SK-N-SH (cell line): ENCODE measurements at regions of chr4 and their contacts with region 1.

Region 1: DNA sequence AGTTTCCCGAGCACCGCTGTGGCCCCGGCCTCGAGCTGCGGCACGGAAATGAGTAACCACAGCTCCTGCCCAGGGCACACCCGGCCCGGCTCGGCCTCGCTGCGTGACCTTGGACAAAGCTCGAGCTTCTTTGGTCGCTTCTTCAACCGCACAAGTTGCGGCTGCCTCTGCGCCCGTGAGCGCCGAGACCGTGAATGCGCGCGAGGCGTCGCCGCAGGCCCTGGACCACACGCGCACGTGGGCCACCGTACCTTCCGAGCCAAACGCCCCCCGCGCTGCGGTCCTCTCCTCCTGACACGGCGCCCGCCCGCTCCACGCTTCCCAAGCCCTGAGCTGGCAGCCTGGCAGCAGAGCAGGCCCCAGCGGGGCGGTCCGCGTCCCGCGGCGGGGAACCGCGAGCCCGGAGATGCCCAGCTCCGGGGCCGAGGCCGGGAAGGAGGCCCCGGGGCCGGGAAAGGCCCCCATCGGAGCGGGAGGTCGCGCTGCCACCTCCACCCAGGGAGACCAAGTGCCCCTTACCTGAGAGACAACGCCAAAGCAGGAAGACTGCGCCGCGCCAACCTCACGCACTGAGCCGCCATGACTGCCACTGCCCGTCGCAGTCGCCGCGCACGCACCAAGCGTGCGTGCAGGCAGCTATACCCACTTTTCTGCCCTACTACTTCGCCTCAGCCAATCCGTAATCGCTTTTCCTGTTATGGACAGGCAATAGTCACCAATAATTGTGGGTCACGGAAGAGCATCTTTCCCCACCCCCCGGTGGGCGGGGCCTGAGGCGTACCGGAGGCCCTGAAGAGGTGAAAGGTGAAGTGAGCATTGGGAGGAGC is at the start of gene GRPEL1:
- DNase-seq: peak; percentile 99
- H3K4me3 ChIP-seq: peak within 1 kb of the TSS; percentile 86 to 91
- H3K27ac ChIP-seq: peak within 1 kb of the TSS; percentile 72 to 80
- H3K4me1 ChIP-seq: peaks cover 0 to 17% of the 10 kb centered on the region in 2 experiments; a peak in 2 of 4 replicates
- H3K27me3 ChIP-seq: no peaks in the 10 kb centered on the region
- CTCF ChIP-seq: no peak
- EP300 ChIP-seq: no peak
- RAD21 ChIP-seq: no peak
- polyA plus RNA-seq, gene GRPEL1: 29.8 and 32.8 TPM in 2 replicates

Region 2: DNA sequence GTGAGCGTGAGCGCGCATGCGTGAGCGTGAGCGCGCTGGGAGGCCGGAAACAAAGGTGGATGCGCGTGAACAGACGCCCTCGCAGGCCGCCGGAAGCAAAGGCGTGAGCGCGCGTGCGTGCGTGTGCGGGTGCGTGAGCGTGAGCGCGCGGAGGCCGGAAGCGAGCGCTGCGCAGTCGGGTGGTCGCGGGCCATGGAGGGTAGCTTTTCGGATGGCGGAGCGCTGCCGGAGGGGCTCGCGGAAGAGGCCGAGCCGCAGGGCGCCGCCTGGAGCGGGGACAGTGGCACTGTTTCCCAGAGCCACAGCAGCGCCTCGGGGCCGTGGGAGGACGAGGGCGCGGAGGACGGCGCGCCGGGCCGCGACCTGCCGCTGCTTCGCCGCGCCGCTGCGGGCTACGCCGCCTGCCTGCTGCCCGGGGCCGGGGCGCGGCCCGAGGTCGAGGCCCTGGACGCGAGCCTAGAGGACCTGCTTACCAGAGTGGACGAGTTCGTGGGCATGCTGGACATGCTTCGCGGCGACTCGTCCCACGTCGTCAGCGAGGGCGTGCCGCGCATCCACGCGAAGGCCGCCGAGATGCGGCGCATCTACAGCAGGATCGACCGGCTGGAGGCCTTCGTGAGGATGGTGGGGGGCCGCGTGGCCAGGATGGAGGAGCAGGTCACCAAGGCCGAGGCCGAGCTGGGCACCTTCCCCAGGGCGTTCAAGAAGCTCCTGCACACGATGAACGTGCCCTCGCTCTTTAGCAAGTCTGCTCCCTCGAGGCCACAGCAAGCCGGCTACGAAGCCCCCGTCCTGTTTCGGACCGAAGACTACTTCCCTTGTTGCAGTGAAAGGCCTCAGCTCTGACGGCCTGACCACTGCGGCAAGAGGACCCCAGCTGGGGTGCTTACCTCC is 351.4 kb before region 1 on chr4 and contains the start of gene BLOC1S4:
- CTCF ChIA-PET with region 1: interaction called, 47 read pairs
- POLR2A ChIA-PET with region 1: interaction called, 3 read pairs
- DNase-seq: peak; percentile 97
- H3K4me3 ChIP-seq: peak within 1 kb of the TSS; percentile 81 to 83
- H3K27ac ChIP-seq: peak within 1 kb of the TSS; percentile 60 to 85
- H3K4me1 ChIP-seq: peaks cover 0 to 6% of the 10 kb centered on the region in 2 experiments; a peak in 2 of 4 replicates
- H3K27me3 ChIP-seq: no peaks in the 10 kb centered on the region
- CTCF ChIP-seq: no peak
- EP300 ChIP-seq: no peak
- RAD21 ChIP-seq: no peak
- polyA plus RNA-seq, gene BLOC1S4: 21.9 and 22.1 TPM in 2 replicates

Region 3: DNA sequence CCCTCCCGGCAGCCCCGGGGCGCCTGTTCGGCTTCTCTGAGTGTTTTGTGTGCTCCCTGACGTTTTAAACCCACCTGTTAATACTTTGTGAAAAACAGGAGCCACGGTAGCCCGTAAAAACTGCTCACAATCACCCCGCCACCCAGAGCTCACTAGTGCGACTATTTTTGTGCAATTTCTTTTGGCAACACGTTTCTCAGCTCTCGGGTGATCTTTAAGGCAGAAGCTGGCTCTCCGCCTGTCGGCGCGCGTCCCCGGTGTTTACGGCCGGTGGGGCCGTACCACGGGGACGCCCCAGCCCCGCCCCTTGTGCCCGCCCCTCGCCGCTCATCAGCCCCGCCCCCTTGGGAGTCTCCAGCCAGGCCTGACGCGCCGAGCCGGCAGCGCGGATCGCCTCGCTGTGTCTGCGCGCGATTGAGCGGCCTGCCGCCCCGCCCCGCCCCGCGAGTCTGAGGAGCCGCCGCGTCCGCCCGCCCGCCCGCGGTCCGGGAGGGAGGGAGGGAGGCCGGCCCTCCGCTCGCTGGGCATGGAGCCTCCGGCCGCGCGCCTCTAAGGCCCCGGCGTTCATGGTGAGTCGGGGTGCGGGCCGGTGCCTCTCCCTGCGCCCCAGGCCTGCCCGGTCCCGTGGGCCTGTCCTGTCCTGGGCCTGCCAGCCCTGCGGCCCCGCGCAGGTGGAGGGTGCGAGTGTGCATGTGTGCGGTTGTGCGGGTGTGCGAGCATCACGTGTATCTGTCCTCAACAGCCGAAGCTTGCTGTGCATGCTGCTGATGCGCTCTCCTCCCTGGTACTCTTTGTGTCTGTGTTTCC is 80.7 kb before region 1 on chr4:
- CTCF ChIA-PET with region 1: interaction called, 27 read pairs
- POLR2A ChIA-PET with region 1: no interaction called
- DNase-seq: peak; percentile 99
- H3K4me3 ChIP-seq: peak overlapping the region; percentile 76 to 96
- H3K27ac ChIP-seq: peak overlapping the region; percentile 88 to 89
- H3K4me1 ChIP-seq: peaks cover 25 to 51% of the 10 kb centered on the region in 2 experiments
- H3K27me3 ChIP-seq: no peaks in the 10 kb centered on the region
- CTCF ChIP-seq: no peak
- EP300 ChIP-seq: no peak
- RAD21 ChIP-seq: peak; percentile 26; the same call in 1 of the 2 replicates

Region 4: DNA sequence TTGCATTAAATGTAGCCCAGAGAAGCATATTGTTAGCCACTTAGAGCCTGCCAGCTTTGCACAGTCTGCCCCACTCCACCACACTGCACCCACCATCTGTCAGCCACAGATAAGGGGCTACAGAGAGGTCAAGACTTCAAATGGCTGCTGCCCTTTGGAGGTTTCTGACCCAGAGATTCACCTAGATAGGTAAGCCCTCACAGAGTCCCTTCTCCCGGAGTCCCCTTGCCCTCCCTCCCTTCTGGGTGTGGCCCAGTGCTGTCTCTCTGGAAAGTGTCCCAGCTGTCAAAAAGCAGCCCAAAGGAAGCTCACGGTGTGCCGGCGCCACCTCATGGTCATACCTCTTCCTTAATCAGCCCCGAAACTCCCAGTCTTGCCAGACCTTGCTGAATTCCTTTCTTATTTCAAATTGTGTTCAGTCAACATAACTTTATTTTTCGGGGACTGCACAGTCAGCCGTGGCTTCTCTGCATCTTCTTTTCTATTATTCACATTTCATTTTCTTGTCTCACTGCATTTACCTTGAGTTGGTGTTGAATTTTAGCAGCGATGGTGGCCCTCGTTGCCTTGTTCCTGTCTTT is 14.3 kb after region 1 on chr4:
- CTCF ChIA-PET with region 1: interaction called, 80 read pairs
- POLR2A ChIA-PET with region 1: no interaction called
- DNase-seq: peak; percentile 65
- H3K4me3 ChIP-seq: no peak overlapping the region
- H3K27ac ChIP-seq: no peak overlapping the region
- H3K4me1 ChIP-seq: no peaks in the 10 kb centered on the region; a peak in 1 of 4 replicates
- H3K27me3 ChIP-seq: no peaks in the 10 kb centered on the region
- CTCF ChIP-seq: peak; percentile 46
- EP300 ChIP-seq: no peak
- RAD21 ChIP-seq: peak; percentile 66

Region 5: GRCh38 chr4:7101692-7102515 is 34.2 kb after region 1 on chr4:
- CTCF ChIA-PET with region 1: interaction called, 14 read pairs
- POLR2A ChIA-PET with region 1: interaction called, 3 read pairs
- DNase-seq: peak; percentile 87
- H3K4me3 ChIP-seq: peak overlapping the region; percentile 68 to 82
- H3K27ac ChIP-seq: peak overlapping the region in 1 of 2 experiments; percentile 44; a peak in 1 of 4 replicates
- H3K4me1 ChIP-seq: peaks cover 7 to 21% of the 10 kb centered on the region in 2 experiments; a peak in 2 of 4 replicates
- H3K27me3 ChIP-seq: no peaks in the 10 kb centered on the region
- CTCF ChIP-seq: peak; percentile 77
- EP300 ChIP-seq: no peak
- RAD21 ChIP-seq: peak; percentile 45

Region 6: GRCh38 chr4:7365462-7366179 is 298.0 kb after region 1 on chr4:
- CTCF ChIA-PET with region 1: no interaction called
- POLR2A ChIA-PET with region 1: no interaction called
- DNase-seq: peak; percentile 62
- H3K4me3 ChIP-seq: no peak overlapping the region
- H3K27ac ChIP-seq: no peak overlapping the region
- H3K4me1 ChIP-seq: peaks cover 0 to 22% of the 10 kb centered on the region in 2 experiments; a peak in 1 of 4 replicates
- H3K27me3 ChIP-seq: peaks cover 14% of the 10 kb centered on the region; the same call in 1 of the 2 replicates
- CTCF ChIP-seq: no peak
- EP300 ChIP-seq: no peak
- RAD21 ChIP-seq: no peak

Region 7: DNA sequence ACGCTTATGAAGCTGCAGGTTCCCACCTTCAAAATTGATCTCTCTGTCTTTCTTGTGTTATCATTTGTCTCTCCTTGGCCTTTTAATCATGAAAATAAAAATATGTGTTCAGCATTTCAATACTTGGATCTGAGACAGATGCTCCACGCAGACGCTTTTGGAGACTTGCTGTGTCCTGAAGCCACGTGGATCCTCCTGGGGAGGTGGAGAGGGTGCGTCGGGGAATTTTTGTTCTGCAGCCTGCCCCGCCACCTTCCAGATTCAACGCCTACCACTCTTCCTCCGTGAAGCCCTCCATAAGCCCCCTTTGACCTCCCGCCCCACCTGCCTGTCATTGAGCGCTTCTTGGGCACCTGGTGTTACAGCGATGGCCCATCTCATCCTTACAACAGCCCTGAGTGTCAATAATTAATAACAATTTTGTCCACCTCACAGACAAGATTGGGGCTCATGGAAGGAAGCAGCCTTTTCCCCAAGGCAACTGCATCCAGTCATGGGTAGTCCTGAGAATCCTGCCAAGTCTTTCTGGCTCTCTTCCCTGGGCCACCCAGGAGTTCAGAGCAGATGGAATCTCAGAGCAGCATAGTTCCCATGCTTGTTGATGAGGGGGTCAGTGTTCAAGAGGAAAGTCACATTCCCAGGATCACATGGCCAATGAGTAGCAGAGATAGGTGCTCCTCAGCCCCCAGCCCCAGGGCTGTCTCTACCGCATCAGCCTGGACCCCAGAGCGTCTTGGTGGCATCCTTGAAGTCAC is 539.7 kb after region 1 on chr4:
- CTCF ChIA-PET with region 1: no interaction called
- POLR2A ChIA-PET with region 1: no interaction called
- DNase-seq: no peak
- H3K4me3 ChIP-seq: no peak overlapping the region
- H3K27ac ChIP-seq: no peak overlapping the region
- H3K4me1 ChIP-seq: peaks cover 0 to 10% of the 10 kb centered on the region in 2 experiments; a peak in 1 of 4 replicates
- H3K27me3 ChIP-seq: no peaks in the 10 kb centered on the region
- CTCF ChIP-seq: no peak
- EP300 ChIP-seq: no peak
- RAD21 ChIP-seq: no peak